HepG2 (cell line): ENCODE measurements at regions of chr7 and their contacts with region 1.

Region 1: GRCh38 chr7:92751902-92752901 is 84.2 kb downstream of the CDK6 start:
- DNase-seq: peak; percentile 93
- ATAC-seq: peak; percentile 98
- H3K4me3 ChIP-seq: no peak overlapping the region; a peak in 1 of 6 replicates
- H3K27ac ChIP-seq: peak overlapping the region; percentile 69
- H3K4me1 ChIP-seq: peaks cover 54% of the 10 kb centered on the region
- H3K27me3 ChIP-seq: no peaks in the 10 kb centered on the region
- CTCF ChIP-seq: no peak
- EP300 ChIP-seq: peak; percentile 43 to 77; a peak in 3 of 4 replicates
- POLR2A ChIP-seq: no peak
- RAD21 ChIP-seq: no peak

Region 2: DNA sequence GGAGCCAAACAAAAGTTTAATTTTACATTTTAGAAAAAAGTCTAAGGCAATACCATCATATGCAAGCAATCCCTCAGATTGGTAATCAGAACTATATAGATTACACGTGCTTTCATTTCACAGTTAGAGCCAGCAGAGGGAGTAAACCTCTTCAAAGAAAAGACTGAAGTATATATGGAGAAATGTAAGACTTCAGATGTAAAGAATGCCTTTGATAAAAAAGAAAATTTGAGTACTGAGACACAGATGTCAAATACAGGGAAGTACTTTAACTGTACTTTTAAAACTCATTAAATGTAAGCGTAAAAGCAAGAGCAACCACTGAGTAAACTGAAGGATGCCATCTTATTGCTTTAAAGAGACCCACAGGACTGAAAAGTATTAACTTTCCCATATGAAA is 60.6 kb before region 1 on chr7:
- CTCF ChIA-PET with region 1: no interaction called
- POLR2A ChIA-PET with region 1: interaction called, 9 read pairs
- in situ Hi-C with region 1: no loop called
- intact Hi-C with region 1: loop called (anchors 1 kb)
- DNase-seq: peak; percentile 68
- ATAC-seq: no peak
- H3K4me3 ChIP-seq: no peak overlapping the region
- H3K27ac ChIP-seq: peak overlapping the region; percentile 23
- H3K4me1 ChIP-seq: peaks cover 55% of the 10 kb centered on the region
- H3K27me3 ChIP-seq: no peaks in the 10 kb centered on the region
- CTCF ChIP-seq: peak; percentile 50; the same call in 1 of the 2 replicates
- EP300 ChIP-seq: no peak
- POLR2A ChIP-seq: no peak
- RAD21 ChIP-seq: peak; percentile 43; the same call in 1 of the 2 replicates